ENCODE measurements at regions of chr9 and their contacts with region 1.

Region 1: GRCh38 chr9:108478431-108478837 is 377.4 kb downstream of the ACTL7B start:
- DNase-seq: peak; percentile 57 to 93
- H3K4me3 ChIP-seq: no peak overlapping the region
- H3K27ac ChIP-seq: peak overlapping the region; percentile 87
- H3K4me1 ChIP-seq: peaks cover 48% of the 10 kb centered on the region
- H3K27me3 ChIP-seq: no peaks in the 10 kb centered on the region
- CTCF ChIP-seq: no peak

Region 2: DNA sequence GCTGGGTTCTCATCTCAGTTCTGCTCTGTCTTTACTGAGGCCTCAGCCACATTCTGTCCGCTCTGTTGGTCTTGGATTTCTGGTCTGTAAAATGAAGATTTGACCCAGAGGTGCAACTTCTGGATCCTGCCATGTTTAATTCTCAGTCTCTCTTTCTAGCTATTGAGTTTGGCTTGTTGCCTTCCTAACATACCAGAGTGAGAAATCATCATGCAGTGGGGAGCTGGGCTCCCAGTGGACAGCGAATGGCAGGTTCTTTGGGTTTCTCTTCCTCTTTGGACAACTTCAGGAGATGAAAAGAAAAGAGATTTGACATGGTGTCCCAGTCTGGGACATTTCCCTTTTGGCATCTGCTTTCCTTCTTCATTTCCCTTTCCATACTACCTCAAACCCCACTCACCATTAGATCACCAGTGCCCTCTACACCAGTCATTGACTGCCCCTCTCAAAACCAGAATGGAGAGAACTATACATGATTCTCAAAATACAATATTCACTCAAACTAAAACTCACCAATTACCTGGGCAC is 42.7 kb after region 1 on chr9:
- CTCF ChIA-PET with region 1: no interaction called
- POLR2A ChIA-PET with region 1: no interaction called
- intact Hi-C with region 1: no loop called
- DNase-seq: peak in 1 of 2 experiments; percentile 51
- H3K4me3 ChIP-seq: no peak overlapping the region
- H3K27ac ChIP-seq: no peak overlapping the region
- H3K4me1 ChIP-seq: no peaks in the 10 kb centered on the region
- H3K27me3 ChIP-seq: no peaks in the 10 kb centered on the region
- CTCF ChIP-seq: no peak

Region 3: GRCh38 chr9:108543251-108543768 is 64.9 kb after region 1 on chr9:
- CTCF ChIA-PET with region 1: no interaction called
- POLR2A ChIA-PET with region 1: interaction called, 4 read pairs
- intact Hi-C with region 1: loop called (anchors 2 kb)
- DNase-seq: peak; percentile 92 to 99
- H3K4me3 ChIP-seq: no peak overlapping the region; the same call in 1 of the 2 replicates
- H3K27ac ChIP-seq: peak overlapping the region; percentile 73
- H3K4me1 ChIP-seq: peaks cover 24% of the 10 kb centered on the region
- H3K27me3 ChIP-seq: no peaks in the 10 kb centered on the region
- CTCF ChIP-seq: 0 out of 2 replicates have a peak, but pooled peaks have one; percentile 14

Region 4: DNA sequence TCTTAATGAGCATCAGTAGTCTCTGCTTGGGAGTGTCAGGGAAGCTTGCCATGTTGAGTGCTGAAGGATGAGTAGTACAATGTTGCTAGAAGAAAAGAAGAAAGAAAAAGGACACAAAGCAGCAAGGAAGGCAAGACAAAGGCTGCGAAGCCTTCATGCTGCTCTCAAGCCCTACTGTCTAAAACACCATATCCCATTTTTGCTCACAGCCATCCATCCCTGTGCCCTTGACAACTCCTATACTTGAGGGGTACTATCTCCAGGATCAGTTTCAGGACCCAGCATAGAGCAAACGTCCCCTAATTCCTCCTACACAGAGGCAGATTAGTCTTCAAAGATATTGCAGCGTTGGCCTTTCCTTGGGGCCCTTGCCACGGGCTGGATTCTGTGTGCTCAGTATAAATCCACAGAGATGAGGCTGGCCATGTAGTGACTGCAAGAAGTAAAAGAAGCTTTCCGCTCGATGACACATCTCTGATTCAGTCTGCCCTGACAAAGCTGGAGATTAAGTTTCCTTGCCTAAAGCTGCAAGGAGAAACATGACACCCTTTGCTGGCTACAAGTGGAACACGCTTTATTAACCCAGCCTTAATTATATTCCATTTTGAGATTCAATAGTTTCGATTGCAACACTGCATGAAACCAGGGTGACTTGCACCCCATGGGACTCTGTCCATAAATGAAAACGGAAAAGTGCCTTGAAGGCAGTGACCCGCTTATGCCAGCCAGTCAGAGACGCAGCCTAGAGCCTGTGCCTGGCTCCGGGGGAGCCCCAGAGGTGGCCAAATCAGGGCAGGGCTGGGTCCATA is 72.8 kb after region 1 on chr9:
- CTCF ChIA-PET with region 1: no interaction called
- POLR2A ChIA-PET with region 1: no interaction called
- intact Hi-C with region 1: loop called (anchors 2 kb)
- DNase-seq: peak; percentile 75 to 99
- H3K4me3 ChIP-seq: peak overlapping the region; percentile 38; the same call in 1 of the 2 replicates
- H3K27ac ChIP-seq: peak overlapping the region; percentile 99
- H3K4me1 ChIP-seq: peaks cover 59% of the 10 kb centered on the region
- H3K27me3 ChIP-seq: no peaks in the 10 kb centered on the region
- CTCF ChIP-seq: no peak

Measured in PC-9 (cell line).